CD4-positive, alpha-beta T cell (primary cell): ENCODE measurements at regions of chr9 and their contacts with region 1.

Region 1: DNA sequence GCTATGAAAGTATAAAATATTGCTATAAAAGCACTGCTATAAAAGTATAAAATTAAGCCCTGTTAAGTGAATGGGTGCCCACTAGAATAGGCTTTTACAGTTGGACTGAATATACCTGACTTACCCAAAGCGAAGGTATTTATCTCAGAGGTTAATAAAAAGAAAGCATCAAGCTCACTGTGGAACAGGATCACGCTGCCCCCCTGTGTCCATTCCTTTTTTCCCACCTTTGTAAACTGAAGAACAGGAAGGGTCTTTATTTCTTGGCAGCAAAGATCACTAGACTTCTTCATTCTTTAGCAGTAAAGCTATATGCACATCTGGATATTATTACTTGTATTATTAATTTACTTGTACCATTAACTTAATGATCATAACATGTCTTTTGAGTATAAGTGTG is 22.1 kb upstream of the PLPP6 start:
- DNase-seq: peak; percentile 43 to 74 (median 51)
- ATAC-seq: peak; percentile 78
- H3K4me3 ChIP-seq: no peak overlapping the region
- H3K4me3 Mint-ChIP-seq: no peak overlapping the region
- H3K27ac ChIP-seq: no peak overlapping the region
- H3K27ac Mint-ChIP-seq: no peak overlapping the region
- H3K4me1 ChIP-seq: no peaks in the 10 kb centered on the region
- H3K4me1 Mint-ChIP-seq: peaks cover 12% of the 10 kb centered on the region
- H3K27me3 ChIP-seq: no peaks in the 10 kb centered on the region
- H3K27me3 Mint-ChIP-seq: no peaks in the 10 kb centered on the region
- CTCF ChIP-seq: peak; percentile 71

Region 2: GRCh38 chr9:4315582-4316215 is 324.3 kb before region 1 on chr9:
- CTCF ChIA-PET with region 1: interaction called, 12 read pairs
- POLR2A ChIA-PET with region 1: no interaction called
- intact Hi-C with region 1: loop called (anchors 1 to 2 kb)
- DNase-seq: peak; percentile 52 to 83 (median 64)
- ATAC-seq: peak; percentile 90
- H3K4me3 ChIP-seq: no peak overlapping the region
- H3K4me3 Mint-ChIP-seq: no peak overlapping the region
- H3K27ac ChIP-seq: no peak overlapping the region
- H3K27ac Mint-ChIP-seq: no peak overlapping the region
- H3K4me1 ChIP-seq: no peaks in the 10 kb centered on the region
- H3K4me1 Mint-ChIP-seq: no peaks in the 10 kb centered on the region
- H3K27me3 ChIP-seq: no peaks in the 10 kb centered on the region
- H3K27me3 Mint-ChIP-seq: no peaks in the 10 kb centered on the region
- CTCF ChIP-seq: peak; percentile 78

Region 3: GRCh38 chr9:4489919-4490704 is 149.9 kb before region 1 on chr9 and contains the start of gene SLC1A1:
- CTCF ChIA-PET with region 1: no interaction called
- POLR2A ChIA-PET with region 1: no interaction called
- intact Hi-C with region 1: loop called in 1 of 2 experiments (anchors 10 kb)
- DNase-seq: peak in 10 of 14 experiments; percentile 4 to 49 (median 26)
- ATAC-seq: peak; percentile 72
- H3K4me3 ChIP-seq: peak within 1 kb of the TSS; percentile 43
- H3K4me3 Mint-ChIP-seq: peak within 1 kb of the TSS; percentile 90
- H3K27ac ChIP-seq: no peak within 1 kb of the TSS
- H3K27ac Mint-ChIP-seq: no peak within 1 kb of the TSS
- H3K4me1 ChIP-seq: peaks cover 22% of the 10 kb centered on the region
- H3K4me1 Mint-ChIP-seq: peaks cover 31% of the 10 kb centered on the region
- H3K27me3 ChIP-seq: peaks cover 31 to 48% of the 10 kb centered on the region in 2 experiments
- H3K27me3 Mint-ChIP-seq: peaks cover 43% of the 10 kb centered on the region
- CTCF ChIP-seq: no peak
- total RNA-seq, gene SLC1A1: 0.11 to 0.14 TPM

Region 4: DNA sequence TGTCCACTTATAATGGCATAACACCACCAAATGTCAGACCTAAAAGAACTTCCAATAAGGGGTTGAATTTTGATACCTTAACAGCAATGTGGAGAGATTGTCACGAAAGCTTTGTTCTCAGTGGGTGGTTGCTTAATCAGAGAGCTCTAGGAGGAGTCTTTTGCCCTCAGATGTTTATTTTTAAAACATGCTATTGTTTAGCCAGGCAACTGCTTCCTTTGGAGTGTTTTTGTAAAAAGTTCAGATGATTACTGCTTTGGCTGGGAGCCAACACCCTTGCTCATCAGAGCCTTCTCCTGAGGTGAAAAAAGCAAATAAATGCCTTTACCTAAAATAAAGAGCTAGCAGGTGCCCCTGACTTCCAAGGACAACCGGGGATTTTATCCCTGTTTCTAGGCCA is 84.8 kb before region 1 on chr9:
- CTCF ChIA-PET with region 1: no interaction called
- POLR2A ChIA-PET with region 1: no interaction called
- intact Hi-C with region 1: no loop called
- DNase-seq: peak in 10 of 14 experiments; percentile 11 to 64 (median 34)
- ATAC-seq: peak; percentile 80
- H3K4me3 ChIP-seq: no peak overlapping the region
- H3K4me3 Mint-ChIP-seq: peak overlapping the region; percentile 1
- H3K27ac ChIP-seq: no peak overlapping the region
- H3K27ac Mint-ChIP-seq: peak overlapping the region; percentile 52
- H3K4me1 ChIP-seq: peaks cover 27% of the 10 kb centered on the region
- H3K4me1 Mint-ChIP-seq: peaks cover 59% of the 10 kb centered on the region
- H3K27me3 ChIP-seq: no peaks in the 10 kb centered on the region
- H3K27me3 Mint-ChIP-seq: no peaks in the 10 kb centered on the region
- CTCF ChIP-seq: no peak

Region 5: DNA sequence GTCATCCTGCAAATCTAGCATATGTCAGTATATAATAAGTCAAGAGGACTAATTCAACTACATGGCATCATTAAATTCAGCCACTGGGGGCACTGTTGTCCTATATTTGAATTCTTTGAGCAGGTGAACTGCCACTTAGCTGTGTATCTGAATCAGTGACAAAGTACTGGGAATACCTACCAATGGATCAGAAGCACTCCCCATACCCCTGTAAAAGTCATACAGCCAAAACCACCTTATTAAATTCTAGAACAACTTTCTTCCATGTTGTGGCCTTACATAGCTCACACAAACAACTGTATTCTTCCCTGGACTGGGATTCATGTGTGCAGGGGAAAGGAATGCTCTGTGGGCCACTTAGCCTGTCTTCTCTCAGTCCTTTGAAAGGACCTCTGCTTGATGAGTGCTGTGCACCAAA is 35.3 kb before region 1 on chr9:
- CTCF ChIA-PET with region 1: interaction called, 10 read pairs
- POLR2A ChIA-PET with region 1: interaction called, 8 read pairs
- intact Hi-C with region 1: loop called in 1 of 2 experiments (anchors 2 kb)
- DNase-seq: peak in 13 of 14 experiments; percentile 20 to 83 (median 61)
- ATAC-seq: peak; percentile 74
- H3K4me3 ChIP-seq: no peak overlapping the region
- H3K4me3 Mint-ChIP-seq: no peak overlapping the region
- H3K27ac ChIP-seq: no peak overlapping the region
- H3K27ac Mint-ChIP-seq: peak overlapping the region; percentile 66
- H3K4me1 ChIP-seq: peaks cover 26% of the 10 kb centered on the region
- H3K4me1 Mint-ChIP-seq: peaks cover 54% of the 10 kb centered on the region
- H3K27me3 ChIP-seq: no peaks in the 10 kb centered on the region
- H3K27me3 Mint-ChIP-seq: no peaks in the 10 kb centered on the region
- CTCF ChIP-seq: peak; percentile 77

Region 6: GRCh38 chr9:4654084-4654483 is 14.1 kb after region 1 on chr9:
- CTCF ChIA-PET with region 1: no interaction called
- POLR2A ChIA-PET with region 1: no interaction called
- intact Hi-C with region 1: no loop called
- DNase-seq: peak in 1 of 14 experiments; percentile 60
- ATAC-seq: no peak
- H3K4me3 ChIP-seq: no peak overlapping the region
- H3K4me3 Mint-ChIP-seq: no peak overlapping the region
- H3K27ac ChIP-seq: no peak overlapping the region
- H3K27ac Mint-ChIP-seq: no peak overlapping the region
- H3K4me1 ChIP-seq: peaks cover 3% of the 10 kb centered on the region
- H3K4me1 Mint-ChIP-seq: no peaks in the 10 kb centered on the region
- H3K27me3 ChIP-seq: no peaks in the 10 kb centered on the region
- H3K27me3 Mint-ChIP-seq: no peaks in the 10 kb centered on the region
- CTCF ChIP-seq: no peak

Region 7: DNA sequence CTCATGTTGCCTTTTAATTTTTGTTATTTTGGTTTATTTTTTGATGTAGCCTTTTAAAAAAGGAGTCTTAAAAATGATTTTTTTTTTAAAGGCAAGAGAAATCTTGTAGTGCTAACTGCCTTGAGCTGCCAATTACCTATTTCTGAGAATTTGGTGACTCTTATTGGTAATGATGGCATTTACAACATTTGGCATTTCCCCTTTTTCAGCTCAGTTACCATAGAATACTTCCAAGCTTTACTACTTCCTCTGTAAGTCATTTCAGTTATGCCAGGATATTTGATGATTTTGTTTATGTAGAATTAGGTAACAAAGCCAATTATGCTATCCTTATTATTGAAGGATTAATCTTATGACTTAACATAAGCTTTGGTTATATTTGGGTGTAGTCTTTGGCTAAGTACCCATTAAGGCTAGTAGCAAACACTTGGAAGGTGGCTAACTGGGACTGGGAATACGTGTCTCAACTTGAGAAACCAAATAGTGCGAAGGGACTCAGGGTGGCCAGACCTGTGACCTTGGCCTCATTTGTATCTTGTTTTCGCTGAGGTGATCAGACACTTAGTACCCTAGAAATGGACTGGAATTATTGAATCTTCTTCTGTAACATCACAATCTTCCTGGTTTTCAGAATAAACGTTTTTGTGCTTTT is 67.1 kb after region 1 on chr9:
- CTCF ChIA-PET with region 1: no interaction called
- POLR2A ChIA-PET with region 1: no interaction called
- intact Hi-C with region 1: no loop called
- DNase-seq: no peak
- ATAC-seq: no peak
- H3K4me3 ChIP-seq: no peak overlapping the region
- H3K4me3 Mint-ChIP-seq: no peak overlapping the region
- H3K27ac ChIP-seq: no peak overlapping the region
- H3K27ac Mint-ChIP-seq: peak overlapping the region; percentile 62
- H3K4me1 ChIP-seq: no peaks in the 10 kb centered on the region
- H3K4me1 Mint-ChIP-seq: no peaks in the 10 kb centered on the region
- H3K27me3 ChIP-seq: no peaks in the 10 kb centered on the region
- H3K27me3 Mint-ChIP-seq: no peaks in the 10 kb centered on the region
- CTCF ChIP-seq: no peak

Region 8: GRCh38 chr9:4792054-4792571 is 152.1 kb after region 1 on chr9:
- CTCF ChIA-PET with region 1: no interaction called
- POLR2A ChIA-PET with region 1: no interaction called
- intact Hi-C with region 1: no loop called
- DNase-seq: no peak
- ATAC-seq: peak; percentile 57
- H3K4me3 ChIP-seq: peak overlapping the region; percentile 69
- H3K4me3 Mint-ChIP-seq: peak overlapping the region; percentile 92
- H3K27ac ChIP-seq: peak overlapping the region; percentile 25 to 62
- H3K27ac Mint-ChIP-seq: peak overlapping the region; percentile 92
- H3K4me1 ChIP-seq: peaks cover 25% of the 10 kb centered on the region
- H3K4me1 Mint-ChIP-seq: peaks cover 38% of the 10 kb centered on the region
- H3K27me3 ChIP-seq: no peaks in the 10 kb centered on the region
- H3K27me3 Mint-ChIP-seq: no peaks in the 10 kb centered on the region
- CTCF ChIP-seq: no peak